ENCODE measurements at regions of chr18 and their contacts with region 1.

Region 1: DNA sequence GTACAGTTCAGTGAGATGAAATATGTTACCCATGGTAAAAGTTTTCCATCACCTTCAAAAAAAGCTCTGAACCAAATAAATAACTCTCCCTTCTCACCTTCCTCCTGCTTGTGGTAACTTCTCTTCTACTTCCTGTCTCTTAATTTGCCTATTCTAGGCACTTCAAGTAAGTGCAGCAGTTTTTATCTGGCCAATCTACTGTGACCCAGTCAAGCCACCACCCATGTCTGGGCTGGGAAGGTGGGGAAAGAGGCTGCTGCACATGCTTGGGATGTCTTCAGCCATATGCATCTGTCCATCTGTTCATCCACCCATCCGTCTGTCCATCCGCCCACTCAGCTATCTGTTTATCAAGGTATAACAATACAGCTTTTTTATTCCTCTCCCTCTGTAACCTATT is 31.6 kb downstream of the ZNF532 start:
- DNase-seq: no peak
- ATAC-seq: peak; percentile 92
- H3K4me3 Mint-ChIP-seq: peak overlapping the region; percentile 80
- H3K27ac Mint-ChIP-seq: peak overlapping the region; percentile 81
- H3K4me1 Mint-ChIP-seq: peaks cover 82% of the 10 kb centered on the region
- H3K27me3 Mint-ChIP-seq: no peaks in the 10 kb centered on the region
- CTCF ChIP-seq: no peak

Region 2: DNA sequence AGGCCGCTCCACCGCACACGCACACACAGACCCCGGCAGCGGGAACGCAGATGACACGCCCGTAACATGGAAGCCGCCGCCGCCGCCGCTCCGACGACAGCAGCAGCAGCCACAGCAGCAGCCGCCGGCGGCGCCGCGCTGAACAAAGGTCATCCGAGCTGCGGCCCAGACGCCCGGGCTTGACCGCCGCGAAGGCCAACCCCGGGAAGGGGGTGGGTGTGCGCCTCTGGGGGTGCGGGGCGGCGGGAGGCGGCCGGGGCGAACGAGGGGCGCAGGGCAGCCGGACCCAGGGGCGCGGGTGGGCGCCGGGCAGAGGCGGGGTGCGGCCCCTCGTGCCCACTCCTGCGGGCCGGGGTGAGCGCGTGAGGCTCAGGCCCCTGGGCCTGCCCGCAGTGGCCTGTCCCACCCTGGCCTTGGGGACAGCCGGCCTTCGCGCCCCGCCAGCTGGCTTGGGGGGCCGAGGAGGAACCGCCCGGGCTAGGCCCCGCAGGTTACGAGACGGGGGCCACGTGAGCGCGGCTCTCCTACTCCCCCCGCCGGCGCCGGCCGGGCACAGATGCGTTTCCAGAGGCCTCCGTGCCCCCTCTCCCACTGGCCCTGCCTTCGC is 32.6 kb before region 1 on chr18:
- CTCF ChIA-PET with region 1: no interaction called
- POLR2A ChIA-PET with region 1: interaction called, 11 read pairs
- intact Hi-C with region 1: loop called (anchors 2 kb)
- DNase-seq: peak; percentile 61
- ATAC-seq: peak; percentile 66
- H3K4me3 Mint-ChIP-seq: peak overlapping the region; percentile 76
- H3K27ac Mint-ChIP-seq: peak overlapping the region; percentile 85
- H3K4me1 Mint-ChIP-seq: peaks cover 32% of the 10 kb centered on the region
- H3K27me3 Mint-ChIP-seq: no peaks in the 10 kb centered on the region
- CTCF ChIP-seq: no peak

Region 3: GRCh38 chr18:58882044-58882443 is 14.2 kb before region 1 on chr18:
- CTCF ChIA-PET with region 1: no interaction called
- POLR2A ChIA-PET with region 1: interaction called, 13 read pairs
- intact Hi-C with region 1: loop called (anchors 1 kb)
- DNase-seq: no peak
- ATAC-seq: no peak
- H3K4me3 Mint-ChIP-seq: no peak overlapping the region
- H3K27ac Mint-ChIP-seq: no peak overlapping the region
- H3K4me1 Mint-ChIP-seq: peaks cover 17% of the 10 kb centered on the region
- H3K27me3 Mint-ChIP-seq: no peaks in the 10 kb centered on the region
- CTCF ChIP-seq: no peak

Region 4: GRCh38 chr18:58911766-58912165 is 15.5 kb after region 1 on chr18:
- CTCF ChIA-PET with region 1: no interaction called
- POLR2A ChIA-PET with region 1: interaction called, 7 read pairs
- intact Hi-C with region 1: loop called (anchors 1 kb)
- DNase-seq: no peak
- ATAC-seq: no peak
- H3K4me3 Mint-ChIP-seq: no peak overlapping the region
- H3K27ac Mint-ChIP-seq: peak overlapping the region; percentile 66
- H3K4me1 Mint-ChIP-seq: peaks cover 74% of the 10 kb centered on the region
- H3K27me3 Mint-ChIP-seq: no peaks in the 10 kb centered on the region
- CTCF ChIP-seq: no peak

Measured in activated B cell treated with CpG ODN at 0.5 μM for 24 hours (primary cell).